Activated B cell treated with CpG ODN at 0.5 μM for 24 hours (primary cell): ENCODE measurements at regions of chr5 and their contacts with region 1.

Region 1: DNA sequence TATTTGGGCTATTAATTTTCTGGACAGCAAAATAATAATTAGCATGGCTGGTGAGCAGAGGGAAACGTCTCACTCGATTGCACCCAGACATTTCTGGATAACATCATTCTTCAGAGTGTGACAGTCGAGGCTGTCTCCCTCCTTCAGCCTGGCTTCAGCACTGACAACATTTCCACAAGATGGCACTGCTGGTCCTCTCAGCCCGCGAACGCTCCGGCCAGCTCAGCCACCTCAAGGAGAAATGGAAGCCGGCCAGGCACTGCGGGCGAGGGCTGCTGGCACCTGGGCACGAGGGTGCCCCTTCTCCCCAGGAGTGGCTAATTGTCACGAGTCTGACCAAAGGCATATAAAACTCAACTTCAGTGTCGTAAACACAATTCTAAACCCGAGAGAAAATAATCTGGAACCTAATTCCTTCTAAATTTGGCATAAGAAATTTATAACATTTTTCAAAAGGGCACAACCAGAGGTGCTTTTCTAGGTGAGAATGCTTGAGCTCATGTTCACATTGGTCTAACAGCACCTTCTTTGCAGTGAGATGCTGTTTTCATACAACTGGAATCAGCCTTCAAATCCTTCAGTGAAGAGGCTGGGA is 65.9 kb downstream of the DAP start:
- DNase-seq: no peak
- ATAC-seq: peak; percentile 55
- H3K4me3 Mint-ChIP-seq: no peak overlapping the region
- H3K27ac Mint-ChIP-seq: no peak overlapping the region
- H3K4me1 Mint-ChIP-seq: peaks cover 30% of the 10 kb centered on the region
- H3K27me3 Mint-ChIP-seq: no peaks in the 10 kb centered on the region
- CTCF ChIP-seq: no peak

Region 2: DNA sequence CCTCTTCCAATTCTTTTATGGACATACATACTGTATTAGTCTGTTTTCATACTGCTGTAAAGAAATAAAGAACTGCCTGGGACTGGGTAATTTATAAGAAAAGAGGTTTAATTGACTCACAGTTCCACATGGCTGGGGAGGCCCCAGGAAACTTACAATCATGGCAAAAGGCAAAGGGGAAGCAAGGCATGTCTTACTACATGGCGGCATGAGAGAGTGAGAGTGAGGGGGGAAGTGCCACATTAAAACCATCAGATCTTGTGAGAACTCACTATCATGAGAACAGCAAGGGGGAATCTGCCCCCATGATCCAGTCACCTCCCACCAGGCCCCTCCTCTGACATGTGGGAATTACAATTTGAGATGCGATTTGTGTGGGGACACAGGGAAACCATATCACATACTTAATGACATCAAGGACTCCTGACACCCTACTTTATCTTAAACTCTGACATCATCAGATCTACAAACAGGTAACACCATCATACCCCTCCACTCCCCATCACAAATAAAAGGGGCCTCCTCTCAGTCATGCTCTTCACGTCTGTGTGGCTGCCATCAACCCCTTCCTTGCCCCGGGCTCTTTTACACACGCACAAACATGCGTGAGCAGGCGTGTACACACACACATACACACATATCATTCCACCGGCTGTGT is 121.5 kb before region 1 on chr5:
- CTCF ChIA-PET with region 1: no interaction called
- POLR2A ChIA-PET with region 1: no interaction called
- intact Hi-C with region 1: no loop called
- DNase-seq: no peak
- ATAC-seq: peak; percentile 32
- H3K4me3 Mint-ChIP-seq: peak overlapping the region; percentile 60
- H3K27ac Mint-ChIP-seq: peak overlapping the region; percentile 75
- H3K4me1 Mint-ChIP-seq: peaks cover 57% of the 10 kb centered on the region
- H3K27me3 Mint-ChIP-seq: no peaks in the 10 kb centered on the region
- CTCF ChIP-seq: no peak

Region 3: DNA sequence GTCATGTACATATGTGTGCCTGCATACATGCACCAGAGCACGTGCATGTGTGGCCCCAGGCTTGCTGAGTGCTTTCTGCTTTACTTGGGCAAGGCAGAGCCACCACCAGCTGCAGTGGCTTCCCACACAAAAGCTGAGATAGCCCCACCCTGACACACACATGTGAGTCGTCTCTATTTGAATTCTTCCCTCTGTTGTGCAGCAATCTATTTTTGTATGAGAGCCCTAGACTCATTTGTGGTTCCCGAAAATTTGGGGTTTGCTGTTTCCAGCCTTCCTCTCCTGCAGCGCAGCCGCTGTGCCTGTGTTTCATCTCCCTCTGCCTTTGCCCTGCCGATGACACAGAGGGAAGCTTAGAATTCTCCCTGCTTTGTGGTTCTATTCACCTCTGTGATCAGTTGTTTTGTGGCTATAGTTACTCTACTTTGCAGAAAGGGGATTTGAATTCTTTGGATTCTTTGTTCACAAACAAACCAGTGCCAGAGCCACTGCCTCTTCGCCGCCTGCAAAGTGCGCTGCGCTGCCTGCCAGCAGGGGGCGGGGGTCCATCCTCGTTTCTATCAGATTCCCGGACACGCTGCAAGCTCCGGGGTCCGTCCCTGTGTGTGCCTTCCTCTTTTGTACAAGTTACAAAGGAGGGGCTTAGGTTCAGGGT is 161.7 kb after region 1 on chr5:
- CTCF ChIA-PET with region 1: no interaction called
- POLR2A ChIA-PET with region 1: no interaction called
- intact Hi-C with region 1: loop called (anchors 2 kb)
- DNase-seq: peak; percentile 23
- ATAC-seq: no peak
- H3K4me3 Mint-ChIP-seq: no peak overlapping the region
- H3K27ac Mint-ChIP-seq: no peak overlapping the region
- H3K4me1 Mint-ChIP-seq: no peaks in the 10 kb centered on the region
- H3K27me3 Mint-ChIP-seq: peaks cover 20% of the 10 kb centered on the region
- CTCF ChIP-seq: peak; percentile 65

Region 4: GRCh38 chr5:11494340-11494739 is 799.2 kb after region 1 on chr5:
- CTCF ChIA-PET with region 1: no interaction called
- POLR2A ChIA-PET with region 1: no interaction called
- intact Hi-C with region 1: loop called (anchors 1 kb)
- DNase-seq: no peak
- ATAC-seq: no peak
- H3K4me3 Mint-ChIP-seq: no peak overlapping the region
- H3K27ac Mint-ChIP-seq: no peak overlapping the region
- H3K4me1 Mint-ChIP-seq: no peaks in the 10 kb centered on the region
- H3K27me3 Mint-ChIP-seq: no peaks in the 10 kb centered on the region
- CTCF ChIP-seq: no peak

Region 5: GRCh38 chr5:12023614-12024241 is 1328.6 kb after region 1 on chr5:
- CTCF ChIA-PET with region 1: interaction called, 14 read pairs
- POLR2A ChIA-PET with region 1: no interaction called
- intact Hi-C with region 1: loop called (anchors 1 kb)
- DNase-seq: no peak
- ATAC-seq: no peak
- H3K4me3 Mint-ChIP-seq: no peak overlapping the region
- H3K27ac Mint-ChIP-seq: no peak overlapping the region
- H3K4me1 Mint-ChIP-seq: no peaks in the 10 kb centered on the region
- H3K27me3 Mint-ChIP-seq: no peaks in the 10 kb centered on the region
- CTCF ChIP-seq: no peak